Left cardiac atrium (tissue), 4 donors: ENCODE measurements at regions of chr3 and their contacts with region 1.

Region 1: DNA sequence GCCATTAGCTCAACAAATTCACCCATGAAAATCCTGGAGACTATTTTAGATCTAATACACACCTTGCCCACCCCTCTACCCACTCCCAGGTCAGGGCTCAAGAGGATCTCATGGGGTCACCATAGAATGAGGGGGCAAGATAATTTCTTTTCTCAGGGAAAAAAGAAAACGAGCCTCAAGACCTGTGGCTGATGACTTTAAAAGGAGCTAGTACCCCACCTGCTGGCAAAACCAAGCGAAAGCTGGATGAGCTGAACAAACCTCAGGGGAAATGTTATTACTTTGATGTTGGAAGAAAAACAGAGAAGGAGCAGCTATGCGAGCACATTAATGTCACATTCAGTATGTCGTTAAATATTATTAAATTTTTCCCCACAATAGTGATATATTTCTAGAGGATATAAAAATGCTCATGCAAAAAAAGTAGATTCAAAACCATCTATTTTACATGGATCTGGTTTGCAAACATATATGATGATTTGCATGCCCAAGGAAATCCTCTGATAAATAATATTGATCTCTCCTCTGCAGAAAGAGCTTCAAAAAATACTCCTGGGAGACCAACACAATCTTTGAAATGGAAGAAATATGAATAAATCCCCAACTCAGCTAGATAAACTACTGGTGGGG is 37.7 kb downstream of the PLD1 start:
- DNase-seq: peak; percentile 60
- ATAC-seq: peak; percentile 24 to 63

Region 2: GRCh38 chr3:171646357-171647133 is 126.0 kb before region 1 on chr3:
- intact Hi-C with region 1: loop called (anchors 5 to 10 kb)
- DNase-seq: no peak
- ATAC-seq: peak; percentile 74 to 75

Region 3: DNA sequence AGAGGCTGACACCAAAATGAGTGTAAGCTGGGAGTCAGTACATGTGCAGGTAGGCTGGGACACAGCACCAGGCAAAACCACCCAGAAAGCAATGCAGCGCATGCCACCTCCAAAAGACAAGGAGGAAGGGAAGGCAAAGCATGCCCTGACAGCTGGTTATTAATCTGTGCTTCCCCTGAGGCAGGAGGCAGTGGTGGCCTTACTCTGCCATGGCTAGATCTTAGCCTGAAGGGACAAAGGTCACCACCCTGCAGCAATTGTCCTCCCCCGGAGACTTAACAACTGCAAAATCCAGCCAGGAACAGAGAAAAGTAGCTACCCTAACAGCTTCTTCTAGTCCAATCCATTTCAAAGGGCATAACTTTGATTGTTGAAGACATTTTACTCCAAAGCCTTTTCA is 36.0 kb before region 1 on chr3:
- intact Hi-C with region 1: loop called in 1 of 2 experiments (anchors 5 kb)
- DNase-seq: no peak
- ATAC-seq: no peak

Region 4: GRCh38 chr3:171809821-171810628 is 37.5 kb after region 1 on chr3 and contains the start of gene PLD1:
- intact Hi-C with region 1: no loop called
- DNase-seq: peak; percentile 92
- ATAC-seq: peak; percentile 83 to 90
- total RNA-seq, gene PLD1: 57.1 to 67.8 TPM